ENCODE measurements at regions of chr7 and their contacts with region 1.

Region 1: GRCh38 chr7:103784887-103785286 is 204.6 kb downstream of the RELN start:
- DNase-seq: no peak

Region 2: DNA sequence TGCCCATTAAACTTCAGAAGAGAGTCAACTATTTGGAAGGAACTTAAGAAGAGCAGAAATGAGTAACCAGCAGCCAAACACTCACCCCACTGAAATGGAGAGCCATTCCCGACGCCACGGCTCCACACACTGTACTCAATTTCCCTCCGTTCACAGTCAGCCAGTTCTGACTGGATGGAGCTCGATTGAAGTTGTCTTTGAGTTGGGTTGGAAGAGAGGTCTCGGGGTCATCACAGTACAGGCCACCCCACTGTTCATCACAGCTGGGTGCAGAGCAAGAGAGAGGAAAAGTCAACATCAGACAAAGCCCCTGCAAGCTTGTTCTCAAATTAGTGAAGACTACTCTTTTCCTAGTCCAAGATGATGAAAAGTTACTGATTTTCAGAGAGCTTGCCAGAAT is 262.9 kb before region 1 on chr7:
- CTCF ChIA-PET with region 1: interaction called, 11 read pairs
- POLR2A ChIA-PET with region 1: no interaction called
- DNase-seq: no peak

Region 3: GRCh38 chr7:103795787-103796186 is 10.9 kb after region 1 on chr7:
- CTCF ChIA-PET with region 1: no interaction called
- POLR2A ChIA-PET with region 1: no interaction called
- DNase-seq: no peak

Measured in HEK293T (cell line).